ENCODE measurements at regions of chr2 and their contacts with region 1.

Region 1: GRCh38 chr2:165203689-165204559 is at the start of gene SCN3A:
- DNase-seq: no peak
- H3K4me3 ChIP-seq: peak within 1 kb of the TSS; percentile 37
- H3K27ac ChIP-seq: no peak within 1 kb of the TSS
- H3K4me1 ChIP-seq: no peaks in the 10 kb centered on the region
- H3K27me3 ChIP-seq: no peaks in the 10 kb centered on the region
- CTCF ChIP-seq: peak; percentile 76
- total RNA-seq, gene SCN3A: 0.99 TPM

Region 2: GRCh38 chr2:164992818-164993217 is 211.1 kb before region 1 on chr2:
- intact Hi-C with region 1: loop called (anchors 5 kb)
- DNase-seq: no peak
- H3K4me3 ChIP-seq: no peak overlapping the region
- H3K27ac ChIP-seq: no peak overlapping the region
- H3K4me1 ChIP-seq: peaks cover 18% of the 10 kb centered on the region
- H3K27me3 ChIP-seq: no peaks in the 10 kb centered on the region
- CTCF ChIP-seq: peak; percentile 64

Region 3: DNA sequence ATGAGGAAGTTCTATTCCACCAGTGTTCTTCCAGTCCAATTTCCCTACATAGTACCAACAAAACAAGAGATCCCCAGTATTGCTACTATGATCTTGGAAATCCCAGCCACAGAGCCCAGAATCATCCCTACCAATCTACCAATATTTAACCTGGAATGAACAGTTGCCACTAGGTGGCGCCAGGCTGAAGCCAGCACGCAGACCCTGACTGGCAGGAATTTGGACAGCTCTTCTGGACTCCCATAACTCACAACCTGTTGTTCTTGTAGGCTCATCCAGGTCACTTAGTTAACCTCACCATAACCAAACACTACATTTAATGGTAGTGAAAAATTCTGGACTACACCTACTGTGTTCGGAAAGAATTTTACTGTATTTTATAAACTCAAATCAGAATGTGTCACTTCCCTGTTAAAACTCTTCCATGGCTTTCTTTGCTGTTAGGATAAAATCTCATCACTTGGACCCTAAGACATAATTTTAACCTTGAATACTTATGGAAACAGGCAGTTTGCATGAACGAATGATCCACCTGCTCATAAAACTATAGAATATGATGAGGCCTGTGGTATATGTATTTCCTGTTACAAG is 188.8 kb before region 1 on chr2:
- intact Hi-C with region 1: loop called (anchors 5 kb)
- DNase-seq: peak; percentile 37
- H3K4me3 ChIP-seq: no peak overlapping the region
- H3K27ac ChIP-seq: no peak overlapping the region
- H3K4me1 ChIP-seq: peaks cover 7% of the 10 kb centered on the region
- H3K27me3 ChIP-seq: peaks cover 8% of the 10 kb centered on the region
- CTCF ChIP-seq: peak; percentile 90